ENCODE measurements at regions of chr16 and their contacts with region 1.

Region 1: GRCh38 chr16:86396897-86397296 is 113.4 kb upstream of the FOXF1 start:
- DNase-seq: no peak
- ATAC-seq: peak in 1 of 4 donors; percentile 49
- H3K4me3 ChIP-seq: no peak overlapping the region
- H3K27ac ChIP-seq: peak overlapping the region in 1 of 12 donors; percentile 85
- H3K4me1 ChIP-seq: peaks cover 0 to 3% (median 0%) of the 10 kb centered on the region in 12 donors
- H3K27me3 ChIP-seq: peaks cover 0 to 35% (median 4%) of the 10 kb centered on the region in 9 donors
- CTCF ChIP-seq: no peak
- POLR2A ChIP-seq: no peak

Region 2: DNA sequence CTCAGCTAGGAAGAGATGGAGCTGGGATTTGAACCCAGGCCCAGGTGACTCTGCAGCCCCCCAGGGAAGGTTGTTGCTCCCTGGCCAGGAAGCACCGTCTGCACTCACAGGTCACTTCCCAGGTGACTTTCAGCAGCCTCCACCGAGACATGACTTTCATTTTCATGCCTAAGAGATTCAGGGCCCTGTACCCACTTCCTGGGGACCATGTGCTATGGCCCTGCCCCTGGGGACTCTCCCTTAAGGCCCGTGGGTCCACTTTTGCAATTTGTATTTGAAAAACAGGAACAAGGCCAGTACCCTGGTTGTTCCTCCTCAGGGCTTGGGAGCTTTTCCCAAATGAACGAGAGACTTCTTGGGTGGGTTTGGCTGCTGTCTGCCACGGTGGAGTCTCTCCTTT is 306.9 kb before region 1 on chr16:
- intact Hi-C with region 1: loop called in 1 of 10 experiments (anchors 10 kb)
- DNase-seq: no peak
- ATAC-seq: no peak
- H3K4me3 ChIP-seq: no peak overlapping the region
- H3K27ac ChIP-seq: no peak overlapping the region
- H3K4me1 ChIP-seq: no peaks in the 10 kb centered on the region
- H3K27me3 ChIP-seq: peaks cover 0 to 56% (median 5%) of the 10 kb centered on the region in 9 donors
- CTCF ChIP-seq: no peak
- POLR2A ChIP-seq: no peak

Region 3: GRCh38 chr16:86424398-86425367 is 27.8 kb after region 1 on chr16:
- intact Hi-C with region 1: loop called in 1 of 10 experiments (anchors 5 kb)
- DNase-seq: no peak
- ATAC-seq: no peak
- H3K4me3 ChIP-seq: no peak overlapping the region
- H3K27ac ChIP-seq: peak overlapping the region in 1 of 12 donors; percentile 72
- H3K4me1 ChIP-seq: peaks cover 0 to 9% (median 0%) of the 10 kb centered on the region in 12 donors
- H3K27me3 ChIP-seq: peaks cover 0 to 16% (median 0%) of the 10 kb centered on the region in 9 donors
- CTCF ChIP-seq: no peak
- POLR2A ChIP-seq: no peak

Measured in heart left ventricle (tissue), 16 donors.